Activated naive CD4-positive, alpha-beta T cell treated with anti-CD3 and anti-CD28 coated beads for 36 hours (primary cell): ENCODE measurements at regions of chr4 and their contacts with region 1.

Region 1: GRCh38 chr4:38902695-38903094 is 35.1 kb downstream of the FAM114A1 start:
- DNase-seq: no peak
- H3K4me3 Mint-ChIP-seq: no peak overlapping the region
- H3K27ac Mint-ChIP-seq: no peak overlapping the region
- H3K4me1 Mint-ChIP-seq: peaks cover 5% of the 10 kb centered on the region
- H3K27me3 Mint-ChIP-seq: peaks cover 3% of the 10 kb centered on the region

Region 2: GRCh38 chr4:38759113-38759789 is 143.4 kb before region 1 on chr4:
- CTCF ChIA-PET with region 1: interaction called, 25 read pairs
- intact Hi-C with region 1: no loop called
- DNase-seq: peak; percentile 82
- H3K4me3 Mint-ChIP-seq: no peak overlapping the region
- H3K27ac Mint-ChIP-seq: no peak overlapping the region
- H3K4me1 Mint-ChIP-seq: peaks cover 18% of the 10 kb centered on the region
- H3K27me3 Mint-ChIP-seq: no peaks in the 10 kb centered on the region

Region 3: GRCh38 chr4:39044364-39044955 is 141.8 kb after region 1 on chr4:
- CTCF ChIA-PET with region 1: interaction called, 27 read pairs
- intact Hi-C with region 1: loop called (anchors 1 kb)
- DNase-seq: peak; percentile 99
- H3K4me3 Mint-ChIP-seq: peak overlapping the region; percentile 83
- H3K27ac Mint-ChIP-seq: peak overlapping the region; percentile 92
- H3K4me1 Mint-ChIP-seq: peaks cover 51% of the 10 kb centered on the region
- H3K27me3 Mint-ChIP-seq: no peaks in the 10 kb centered on the region

Region 4: DNA sequence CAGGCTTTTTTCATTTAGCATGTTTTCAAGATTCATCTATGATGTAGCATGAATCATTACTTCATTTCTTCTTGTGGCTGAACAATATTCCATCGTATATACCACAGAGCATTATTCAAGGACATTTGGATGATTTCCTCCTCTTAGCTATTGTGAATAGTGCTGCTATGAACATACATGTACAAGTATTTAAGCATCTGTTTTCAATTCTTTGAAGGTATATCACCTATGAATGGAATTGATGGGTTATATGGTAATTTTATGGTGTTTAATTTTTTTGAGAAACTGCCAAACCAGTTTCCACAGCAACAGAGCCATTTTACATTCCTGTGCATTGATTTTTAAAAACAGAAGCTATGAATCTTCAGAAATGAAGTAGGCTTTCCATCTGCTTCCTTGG is 243.5 kb after region 1 on chr4:
- CTCF ChIA-PET with region 1: interaction called, 10 read pairs
- intact Hi-C with region 1: no loop called
- DNase-seq: no peak
- H3K4me3 Mint-ChIP-seq: no peak overlapping the region
- H3K27ac Mint-ChIP-seq: no peak overlapping the region
- H3K4me1 Mint-ChIP-seq: peaks cover 4% of the 10 kb centered on the region
- H3K27me3 Mint-ChIP-seq: no peaks in the 10 kb centered on the region

Region 5: DNA sequence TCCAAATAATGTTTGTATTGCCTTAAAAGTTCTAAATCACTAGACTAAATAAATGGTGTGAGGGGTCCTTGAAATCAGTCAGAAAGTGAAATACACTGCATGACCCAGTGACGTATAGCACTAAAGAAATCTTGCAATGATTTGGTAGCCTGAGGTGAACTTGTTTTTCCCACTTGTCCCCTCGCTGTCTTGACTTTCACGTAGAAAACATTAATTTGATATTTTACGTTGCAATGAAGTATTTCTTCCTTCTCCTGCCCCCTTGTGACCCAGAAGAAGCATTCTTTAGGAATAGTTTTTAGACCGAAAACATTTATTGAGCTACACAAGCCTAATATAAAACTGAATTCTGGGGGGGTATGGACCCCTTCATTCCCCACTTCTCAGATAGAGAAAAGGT is 507.7 kb after region 1 on chr4:
- CTCF ChIA-PET with region 1: interaction called, 3 read pairs
- intact Hi-C with region 1: loop called (anchors 5 kb)
- DNase-seq: no peak
- H3K4me3 Mint-ChIP-seq: no peak overlapping the region
- H3K27ac Mint-ChIP-seq: no peak overlapping the region
- H3K4me1 Mint-ChIP-seq: no peaks in the 10 kb centered on the region
- H3K27me3 Mint-ChIP-seq: no peaks in the 10 kb centered on the region